ENCODE measurements at regions of chr6 and their contacts with region 1.

Region 1: GRCh38 chr6:166515072-166515810 is 71.2 kb downstream of the RAMACL start:
- DNase-seq: peak; percentile 33
- ATAC-seq: peak; percentile 78
- H3K4me3 Mint-ChIP-seq: no peak overlapping the region
- H3K27ac Mint-ChIP-seq: no peak overlapping the region
- H3K4me1 Mint-ChIP-seq: peaks cover 20% of the 10 kb centered on the region
- H3K27me3 Mint-ChIP-seq: no peaks in the 10 kb centered on the region
- CTCF ChIP-seq: no peak

Region 2: DNA sequence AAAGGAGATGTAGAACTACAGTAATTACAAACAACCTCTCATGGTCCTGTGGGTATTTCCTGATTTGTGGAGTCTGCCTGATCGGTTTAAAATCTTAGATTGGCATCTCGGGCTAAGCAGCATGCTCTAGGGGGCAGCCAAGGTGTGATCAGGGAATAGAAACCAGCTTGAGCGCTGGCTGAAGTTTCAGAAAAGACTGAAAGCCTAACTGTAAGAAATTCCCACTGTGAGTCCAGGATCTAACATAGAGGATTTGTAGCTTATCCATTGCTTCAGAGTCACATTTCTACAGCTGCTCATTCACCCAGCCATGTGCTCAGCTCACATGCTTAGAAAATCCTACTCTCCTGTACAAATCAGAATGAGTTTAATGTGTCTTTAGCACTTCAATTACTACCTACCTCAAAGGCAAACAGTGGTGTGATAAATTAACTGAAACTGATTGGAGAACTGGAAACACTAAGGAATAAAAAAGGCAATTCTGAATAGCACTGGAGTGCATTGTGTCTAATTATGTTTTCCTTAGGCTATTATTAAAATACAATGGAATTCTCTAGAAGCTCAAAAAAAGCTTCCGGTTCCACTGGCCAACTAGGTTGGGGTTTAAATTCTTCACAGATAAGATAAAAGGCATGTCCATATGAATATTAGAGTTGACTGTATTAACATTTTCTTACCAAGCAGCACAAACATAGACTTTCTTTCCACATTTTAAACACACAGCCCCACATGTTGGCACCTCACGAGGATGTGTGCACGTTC is 58.7 kb before region 1 on chr6:
- CTCF ChIA-PET with region 1: interaction called, 4 read pairs
- POLR2A ChIA-PET with region 1: no interaction called
- intact Hi-C with region 1: loop called (anchors 1 kb)
- DNase-seq: no peak
- ATAC-seq: no peak
- H3K4me3 Mint-ChIP-seq: no peak overlapping the region
- H3K27ac Mint-ChIP-seq: no peak overlapping the region
- H3K4me1 Mint-ChIP-seq: peaks cover 16% of the 10 kb centered on the region
- H3K27me3 Mint-ChIP-seq: no peaks in the 10 kb centered on the region
- CTCF ChIP-seq: no peak

Region 3: DNA sequence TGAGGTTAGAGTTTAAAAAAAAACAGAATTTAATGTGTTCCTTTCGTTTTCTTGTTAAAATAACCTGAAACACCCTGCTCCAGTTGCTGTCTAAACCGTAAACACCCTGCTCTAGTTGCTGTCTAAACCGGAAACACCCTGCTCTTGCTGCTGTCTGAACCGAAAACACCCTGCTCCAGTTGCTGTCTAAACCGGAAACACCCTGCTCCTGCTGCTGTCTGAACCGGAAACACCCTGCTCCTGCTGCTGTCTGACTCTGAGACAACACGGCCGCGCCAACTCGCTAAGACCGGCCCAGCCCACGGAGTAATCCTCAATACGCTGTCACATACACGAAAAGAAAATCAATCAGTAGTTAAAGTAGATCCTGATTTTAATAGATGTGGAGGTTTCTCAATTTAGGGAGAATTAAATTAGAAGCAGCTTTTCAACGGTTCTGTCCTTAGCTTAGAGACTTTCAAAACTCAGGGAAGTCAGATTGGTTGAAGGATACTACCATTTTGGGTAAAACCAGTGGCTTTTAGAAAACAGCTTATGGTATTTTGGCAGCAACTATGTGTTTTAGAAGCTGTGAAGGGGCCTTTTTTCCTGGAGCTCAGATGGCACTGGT is 27.1 kb before region 1 on chr6:
- CTCF ChIA-PET with region 1: interaction called, 4 read pairs
- POLR2A ChIA-PET with region 1: interaction called, 4 read pairs
- intact Hi-C with region 1: loop called (anchors 1 kb)
- DNase-seq: peak; percentile 37
- ATAC-seq: peak; percentile 97
- H3K4me3 Mint-ChIP-seq: peak overlapping the region; percentile 84
- H3K27ac Mint-ChIP-seq: peak overlapping the region; percentile 97
- H3K4me1 Mint-ChIP-seq: peaks cover 23% of the 10 kb centered on the region
- H3K27me3 Mint-ChIP-seq: no peaks in the 10 kb centered on the region
- CTCF ChIP-seq: no peak

Region 4: GRCh38 chr6:166540631-166541331 is 25.5 kb after region 1 on chr6:
- CTCF ChIA-PET with region 1: interaction called, 3 read pairs
- POLR2A ChIA-PET with region 1: no interaction called
- intact Hi-C with region 1: loop called (anchors 2 kb)
- DNase-seq: peak; percentile 31
- ATAC-seq: peak; percentile 92
- H3K4me3 Mint-ChIP-seq: peak overlapping the region; percentile 78
- H3K27ac Mint-ChIP-seq: peak overlapping the region; percentile 79
- H3K4me1 Mint-ChIP-seq: peaks cover 23% of the 10 kb centered on the region
- H3K27me3 Mint-ChIP-seq: no peaks in the 10 kb centered on the region
- CTCF ChIP-seq: no peak

Region 5: GRCh38 chr6:166751051-166751595 is 235.9 kb after region 1 on chr6:
- CTCF ChIA-PET with region 1: no interaction called
- POLR2A ChIA-PET with region 1: no interaction called
- intact Hi-C with region 1: loop called (anchors 2 kb)
- DNase-seq: peak; percentile 63
- ATAC-seq: peak; percentile 99
- H3K4me3 Mint-ChIP-seq: peak overlapping the region; percentile 85
- H3K27ac Mint-ChIP-seq: peak overlapping the region; percentile 80
- H3K4me1 Mint-ChIP-seq: peaks cover 28% of the 10 kb centered on the region
- H3K27me3 Mint-ChIP-seq: peaks cover 10% of the 10 kb centered on the region
- CTCF ChIP-seq: no peak

Region 6: DNA sequence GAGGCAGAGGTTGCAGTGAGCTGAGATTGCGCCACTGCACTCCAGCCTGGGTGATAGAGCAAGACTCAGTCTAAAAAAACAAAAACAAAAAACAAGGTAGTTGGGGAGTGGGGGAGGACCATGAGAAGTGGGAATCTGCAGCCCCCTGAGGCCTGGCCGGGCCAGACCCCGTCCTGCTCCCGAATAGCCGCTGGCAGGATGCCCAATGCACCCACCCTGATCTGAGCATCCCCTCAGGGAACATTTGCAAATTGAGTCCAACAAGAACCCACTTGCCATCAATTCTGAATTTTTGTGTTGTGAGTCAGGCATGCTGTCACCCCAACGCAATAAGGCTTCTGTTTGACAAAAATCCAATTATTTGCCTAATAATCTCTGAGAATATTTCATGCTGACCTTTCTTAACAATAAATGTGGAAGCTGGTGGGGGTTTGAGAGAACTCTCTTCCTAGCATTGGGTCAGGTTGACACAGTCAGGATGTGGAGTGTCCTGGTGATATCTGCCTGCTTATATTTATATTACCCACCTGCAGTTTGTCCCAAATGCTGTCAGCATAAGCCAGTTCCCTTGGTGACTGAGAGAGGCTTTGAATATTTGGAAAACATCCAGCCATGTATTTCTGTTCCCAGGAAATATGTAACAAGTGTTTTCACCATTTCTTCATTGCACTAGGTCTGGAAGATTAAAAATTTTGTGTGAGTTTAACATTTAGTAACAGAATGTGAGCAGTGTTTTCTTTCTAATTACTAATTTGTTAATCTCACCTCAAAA is 1592.2 kb after region 1 on chr6:
- CTCF ChIA-PET with region 1: no interaction called
- POLR2A ChIA-PET with region 1: no interaction called
- intact Hi-C with region 1: no loop called
- DNase-seq: no peak
- ATAC-seq: no peak
- H3K4me3 Mint-ChIP-seq: no peak overlapping the region
- H3K27ac Mint-ChIP-seq: no peak overlapping the region
- H3K4me1 Mint-ChIP-seq: no peaks in the 10 kb centered on the region
- H3K27me3 Mint-ChIP-seq: peaks cover 22% of the 10 kb centered on the region
- CTCF ChIP-seq: no peak